GM12878 (cell line): ENCODE measurements at regions of chr2 and their contacts with region 1.

Region 1: DNA sequence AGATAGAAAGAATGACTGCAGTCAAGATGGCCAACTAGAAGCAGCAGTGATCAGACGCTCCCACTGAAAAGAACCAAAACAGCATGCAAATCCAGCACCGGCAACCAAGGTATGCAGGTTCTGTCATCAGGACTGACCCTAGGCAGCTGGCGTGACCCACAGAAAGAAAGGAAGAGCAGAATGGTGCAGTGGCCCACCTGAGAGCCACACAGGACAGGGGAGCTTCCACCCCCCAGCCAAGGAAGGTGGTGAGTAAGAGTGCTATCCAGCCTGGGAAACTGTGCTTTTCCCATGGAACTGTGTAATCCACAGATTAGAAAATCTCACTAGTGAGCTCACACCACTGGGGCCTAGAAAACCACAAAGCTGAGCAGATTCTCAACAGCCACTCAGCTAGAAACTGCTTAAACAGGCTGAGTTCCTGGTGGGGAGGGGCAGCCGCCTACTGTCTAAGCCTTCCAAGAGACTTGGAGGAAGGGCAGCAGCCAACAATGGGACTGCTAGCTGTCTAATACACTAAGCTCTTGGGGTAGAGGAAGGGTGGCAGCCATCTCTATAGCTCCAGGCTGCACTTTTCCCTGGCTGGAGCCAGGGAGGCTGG is 127.9 kb downstream of the EVA1A start:
- DNase-seq: peak; percentile 96
- ATAC-seq: peak; percentile 86
- H3K4me3 ChIP-seq: peak overlapping the region; percentile 31
- H3K27ac ChIP-seq: peak overlapping the region; percentile 95
- H3K4me1 ChIP-seq: peaks cover 45% of the 10 kb centered on the region
- H3K27me3 ChIP-seq: no peaks in the 10 kb centered on the region
- CTCF ChIP-seq: no peak
- EP300 ChIP-seq: peak; percentile 50 to 69; a peak in 2 of 4 replicates
- POLR2A ChIP-seq: peak; percentile 66
- RAD21 ChIP-seq: peak; percentile 40

Region 2: DNA sequence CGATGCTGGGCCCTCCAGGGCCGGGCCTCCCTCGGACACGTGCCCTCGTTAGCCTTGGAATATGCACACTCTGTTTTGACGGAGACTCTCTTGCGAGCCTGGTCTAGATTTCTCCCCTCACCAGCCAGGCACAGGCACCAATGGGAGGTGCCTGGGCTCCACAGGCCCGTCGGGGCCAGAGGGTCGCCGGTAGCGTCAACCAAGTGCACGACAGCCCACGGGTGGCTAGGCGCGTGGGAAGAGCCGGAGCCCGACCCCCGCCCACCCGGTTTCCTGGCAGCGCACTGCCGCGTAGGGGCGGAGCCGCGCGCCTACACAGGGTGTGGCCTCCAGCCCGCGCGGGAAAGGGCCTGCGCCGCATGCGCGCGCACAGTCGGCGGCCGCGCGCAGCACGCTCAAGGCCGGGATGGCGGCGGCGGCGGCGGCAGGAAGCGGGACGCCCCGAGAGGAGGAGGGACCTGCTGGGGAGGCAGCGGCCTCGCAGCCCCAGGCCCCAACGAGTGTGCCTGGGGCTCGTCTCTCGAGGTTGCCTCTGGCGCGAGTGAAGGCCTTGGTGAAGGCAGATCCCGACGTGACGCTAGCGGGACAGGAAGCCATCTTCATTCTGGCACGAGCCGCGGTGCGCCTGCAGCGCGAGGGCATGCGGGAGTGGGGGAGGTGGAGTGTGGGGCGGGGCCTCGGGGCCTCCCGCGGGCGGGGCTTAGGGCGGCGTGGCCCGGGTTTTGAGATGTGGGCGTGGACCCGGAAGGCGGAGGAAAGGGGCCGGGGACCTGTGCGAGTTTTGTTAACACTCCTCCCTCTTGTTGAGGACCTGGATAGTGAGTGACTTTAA is 474.4 kb before region 1 on chr2 and contains the start of gene POLE4:
- CTCF ChIA-PET with region 1: no interaction called
- POLR2A ChIA-PET with region 1: no interaction called
- RAD21 ChIA-PET with region 1: no interaction called
- SMC1A ChIA-PET with region 1: no interaction called
- in situ Hi-C with region 1: no loop called
- intact Hi-C with region 1: loop called (anchors 5 kb)
- DNase-seq: peak; percentile 68
- ATAC-seq: peak; percentile 97
- H3K4me3 ChIP-seq: peak within 1 kb of the TSS; percentile 78
- H3K27ac ChIP-seq: peak within 1 kb of the TSS; percentile 93
- H3K4me1 ChIP-seq: peaks cover 8% of the 10 kb centered on the region
- H3K27me3 ChIP-seq: no peaks in the 10 kb centered on the region
- CTCF ChIP-seq: no peak
- EP300 ChIP-seq: no peak
- POLR2A ChIP-seq: peak; percentile 98
- RAD21 ChIP-seq: no peak
- polyA plus RNA-seq, gene POLE4: 48.8 to 86.2 TPM

Region 3: GRCh38 chr2:75268112-75268511 is 164.7 kb before region 1 on chr2:
- CTCF ChIA-PET with region 1: no interaction called
- POLR2A ChIA-PET with region 1: no interaction called
- RAD21 ChIA-PET with region 1: no interaction called
- SMC1A ChIA-PET with region 1: no interaction called
- in situ Hi-C with region 1: no loop called
- intact Hi-C with region 1: no loop called
- DNase-seq: no peak
- ATAC-seq: no peak
- H3K4me3 ChIP-seq: no peak overlapping the region
- H3K27ac ChIP-seq: no peak overlapping the region
- H3K4me1 ChIP-seq: no peaks in the 10 kb centered on the region
- H3K27me3 ChIP-seq: no peaks in the 10 kb centered on the region
- CTCF ChIP-seq: no peak
- EP300 ChIP-seq: no peak
- POLR2A ChIP-seq: no peak
- RAD21 ChIP-seq: no peak

Region 4: DNA sequence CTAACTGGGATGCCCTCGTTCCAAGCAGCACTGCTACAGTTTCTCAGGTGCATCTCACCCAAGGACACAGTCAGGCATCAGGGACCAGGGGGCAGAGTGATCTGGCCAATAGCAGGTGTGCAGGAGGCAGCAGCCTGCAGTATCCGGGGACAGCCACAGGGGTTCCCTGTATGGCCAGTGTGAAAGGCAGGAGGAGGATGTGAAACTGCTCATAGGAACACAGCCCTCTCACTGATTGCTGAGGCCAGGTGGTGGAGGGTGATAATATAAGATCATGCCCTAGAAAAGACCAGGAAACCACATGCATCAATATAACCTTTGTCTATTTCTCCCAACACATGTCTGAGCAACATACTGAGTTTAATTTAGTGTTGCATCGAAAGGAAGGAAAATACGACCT is 120.9 kb before region 1 on chr2:
- CTCF ChIA-PET with region 1: interaction called, 3 read pairs
- POLR2A ChIA-PET with region 1: interaction called, 4 read pairs
- RAD21 ChIA-PET with region 1: interaction called, 8 read pairs
- SMC1A ChIA-PET with region 1: interaction called, 6 read pairs
- in situ Hi-C with region 1: no loop called
- intact Hi-C with region 1: loop called (anchors 10 kb)
- DNase-seq: peak; percentile 89
- ATAC-seq: peak; percentile 100
- H3K4me3 ChIP-seq: no peak overlapping the region
- H3K27ac ChIP-seq: no peak overlapping the region
- H3K4me1 ChIP-seq: peaks cover 9% of the 10 kb centered on the region
- H3K27me3 ChIP-seq: no peaks in the 10 kb centered on the region
- CTCF ChIP-seq: peak; percentile 84 to 89 (median 85)
- EP300 ChIP-seq: peak; percentile 28 to 76; a peak in 3 of 4 replicates
- POLR2A ChIP-seq: no peak
- RAD21 ChIP-seq: peak; percentile 79

Region 5: GRCh38 chr2:75411574-75411973 is 21.3 kb before region 1 on chr2:
- CTCF ChIA-PET with region 1: interaction called, 235 read pairs
- POLR2A ChIA-PET with region 1: interaction called, 157 read pairs
- RAD21 ChIA-PET with region 1: interaction called, 147 read pairs
- SMC1A ChIA-PET with region 1: interaction called, 244 read pairs
- in situ Hi-C with region 1: no loop called
- intact Hi-C with region 1: no loop called
- DNase-seq: no peak
- ATAC-seq: no peak
- H3K4me3 ChIP-seq: no peak overlapping the region
- H3K27ac ChIP-seq: no peak overlapping the region
- H3K4me1 ChIP-seq: no peaks in the 10 kb centered on the region; the same call in 1 of the 2 replicates
- H3K27me3 ChIP-seq: no peaks in the 10 kb centered on the region
- CTCF ChIP-seq: no peak
- EP300 ChIP-seq: no peak
- POLR2A ChIP-seq: no peak
- RAD21 ChIP-seq: no peak

Region 6: DNA sequence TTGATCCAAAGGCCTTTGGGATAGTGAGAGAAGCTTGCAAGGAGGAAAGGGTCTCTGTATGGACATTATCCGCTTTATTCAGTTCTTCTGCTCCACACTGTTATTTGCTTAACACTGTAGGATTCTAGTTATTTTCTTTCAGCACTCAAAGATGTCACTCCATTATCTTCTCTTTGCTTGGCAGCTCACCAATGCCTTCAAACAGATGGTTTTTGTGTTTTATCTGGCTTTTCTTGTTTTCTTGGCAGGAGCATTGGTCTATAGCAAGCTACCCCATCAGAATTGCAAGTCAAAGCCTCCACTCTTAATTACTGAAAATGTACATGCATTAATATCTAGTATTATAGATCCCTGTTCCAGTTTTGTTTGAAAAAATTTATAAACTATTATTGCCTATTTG is 10.9 kb before region 1 on chr2:
- CTCF ChIA-PET with region 1: interaction called, 235 read pairs
- POLR2A ChIA-PET with region 1: interaction called, 157 read pairs
- RAD21 ChIA-PET with region 1: interaction called, 74 read pairs
- SMC1A ChIA-PET with region 1: interaction called, 244 read pairs
- in situ Hi-C with region 1: no loop called
- intact Hi-C with region 1: loop called (anchors 1 kb)
- DNase-seq: no peak
- ATAC-seq: no peak
- H3K4me3 ChIP-seq: no peak overlapping the region
- H3K27ac ChIP-seq: no peak overlapping the region
- H3K4me1 ChIP-seq: no peaks in the 10 kb centered on the region
- H3K27me3 ChIP-seq: no peaks in the 10 kb centered on the region
- CTCF ChIP-seq: no peak
- EP300 ChIP-seq: no peak
- POLR2A ChIP-seq: no peak
- RAD21 ChIP-seq: no peak

Region 7: DNA sequence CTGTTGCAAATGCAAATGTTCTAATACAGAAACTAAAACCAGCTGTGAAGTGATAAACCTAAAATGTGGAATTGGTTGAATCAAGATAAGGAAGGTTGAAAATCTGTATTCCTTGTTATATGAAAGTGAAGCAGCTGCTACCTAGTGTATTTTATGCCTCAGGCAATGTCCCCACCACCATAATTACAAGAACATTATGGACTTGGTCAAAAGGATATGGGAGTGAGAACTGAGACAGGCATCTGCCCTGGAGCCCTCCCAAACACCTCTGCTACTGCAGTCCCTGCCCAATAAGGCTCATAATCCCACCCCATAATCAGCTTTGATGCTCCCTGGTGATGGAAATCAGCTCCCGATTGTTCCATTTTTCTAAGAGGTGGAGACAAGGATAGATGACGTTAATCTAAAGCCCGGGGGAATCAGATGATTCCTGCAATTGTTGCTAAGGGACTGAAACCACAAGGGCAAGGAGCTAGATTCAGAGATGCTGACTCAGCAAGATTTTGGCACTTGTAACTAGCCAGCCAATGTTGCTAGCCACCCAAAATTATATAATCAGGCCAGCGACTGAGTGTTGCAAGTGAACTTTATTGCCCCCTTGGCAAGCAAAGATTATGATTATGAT is 58.4 kb after region 1 on chr2:
- CTCF ChIA-PET with region 1: no interaction called
- POLR2A ChIA-PET with region 1: no interaction called
- RAD21 ChIA-PET with region 1: no interaction called
- SMC1A ChIA-PET with region 1: no interaction called
- in situ Hi-C with region 1: no loop called
- intact Hi-C with region 1: no loop called
- DNase-seq: no peak
- ATAC-seq: no peak
- H3K4me3 ChIP-seq: no peak overlapping the region
- H3K27ac ChIP-seq: no peak overlapping the region
- H3K4me1 ChIP-seq: no peaks in the 10 kb centered on the region
- H3K27me3 ChIP-seq: no peaks in the 10 kb centered on the region
- CTCF ChIP-seq: no peak
- EP300 ChIP-seq: no peak
- POLR2A ChIP-seq: no peak
- RAD21 ChIP-seq: no peak